ENCODE measurements at regions of chr1 and their contacts with region 1.

Region 1: GRCh38 chr1:207672522-207673130 is 27.7 kb downstream of the CR1L start:
- DNase-seq: peak; percentile 64
- ATAC-seq: peak; percentile 58
- H3K4me3 Mint-ChIP-seq: no peak overlapping the region
- H3K27ac Mint-ChIP-seq: no peak overlapping the region
- H3K4me1 Mint-ChIP-seq: peaks cover 3% of the 10 kb centered on the region
- H3K27me3 Mint-ChIP-seq: peaks cover 50% of the 10 kb centered on the region
- CTCF ChIP-seq: peak; percentile 65

Region 2: DNA sequence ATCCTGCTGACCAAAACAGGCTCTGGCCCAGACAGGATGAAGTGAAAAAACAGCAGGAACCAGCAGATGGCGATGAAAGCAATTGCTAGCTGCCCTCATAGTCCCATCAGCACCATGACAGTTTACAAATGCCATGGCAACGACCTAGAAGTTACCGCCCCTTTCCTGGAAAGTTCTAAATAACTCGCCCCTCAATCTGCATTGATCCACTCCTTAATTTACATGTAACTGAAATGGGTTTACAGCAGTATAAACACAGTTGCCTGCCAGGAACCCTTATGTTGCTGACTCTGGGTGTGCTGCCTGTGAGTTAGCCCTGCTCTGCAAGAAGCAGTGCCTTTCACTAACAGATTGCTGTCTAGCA is 93.2 kb before region 1 on chr1:
- CTCF ChIA-PET with region 1: interaction called, 10 read pairs
- POLR2A ChIA-PET with region 1: no interaction called
- intact Hi-C with region 1: no loop called
- DNase-seq: peak; percentile 67
- ATAC-seq: peak; percentile 85
- H3K4me3 Mint-ChIP-seq: no peak overlapping the region
- H3K27ac Mint-ChIP-seq: no peak overlapping the region
- H3K4me1 Mint-ChIP-seq: peaks cover 5% of the 10 kb centered on the region
- H3K27me3 Mint-ChIP-seq: no peaks in the 10 kb centered on the region
- CTCF ChIP-seq: peak; percentile 61

Region 3: GRCh38 chr1:207654320-207654719 is 18.3 kb before region 1 on chr1:
- CTCF ChIA-PET with region 1: no interaction called
- POLR2A ChIA-PET with region 1: no interaction called
- intact Hi-C with region 1: no loop called
- DNase-seq: no peak
- ATAC-seq: no peak
- H3K4me3 Mint-ChIP-seq: no peak overlapping the region
- H3K27ac Mint-ChIP-seq: no peak overlapping the region
- H3K4me1 Mint-ChIP-seq: peaks cover 5% of the 10 kb centered on the region
- H3K27me3 Mint-ChIP-seq: peaks cover 6% of the 10 kb centered on the region
- CTCF ChIP-seq: no peak

Measured in activated CD8-positive, alpha-beta T cell treated with anti-CD3 and anti-CD28 coated beads for 36 hours (primary cell).